AG04449 (cell line): ENCODE measurements at regions of chr15 and their contacts with region 1.

Region 1: GRCh38 chr15:75508840-75509532 is 57.5 kb upstream of the SIN3A start:
- DNase-seq: no peak
- H3K4me3 ChIP-seq: no peak overlapping the region
- CTCF ChIP-seq: peak; percentile 54

Region 2: GRCh38 chr15:75073197-75073596 is 435.8 kb before region 1 on chr15:
- CTCF ChIA-PET with region 1: no interaction called
- POLR2A ChIA-PET with region 1: no interaction called
- DNase-seq: no peak
- H3K4me3 ChIP-seq: no peak overlapping the region
- CTCF ChIP-seq: no peak

Region 3: GRCh38 chr15:75327005-75327404 is 182.0 kb before region 1 on chr15:
- CTCF ChIA-PET with region 1: no interaction called
- POLR2A ChIA-PET with region 1: no interaction called
- DNase-seq: no peak
- H3K4me3 ChIP-seq: no peak overlapping the region
- CTCF ChIP-seq: no peak

Region 4: DNA sequence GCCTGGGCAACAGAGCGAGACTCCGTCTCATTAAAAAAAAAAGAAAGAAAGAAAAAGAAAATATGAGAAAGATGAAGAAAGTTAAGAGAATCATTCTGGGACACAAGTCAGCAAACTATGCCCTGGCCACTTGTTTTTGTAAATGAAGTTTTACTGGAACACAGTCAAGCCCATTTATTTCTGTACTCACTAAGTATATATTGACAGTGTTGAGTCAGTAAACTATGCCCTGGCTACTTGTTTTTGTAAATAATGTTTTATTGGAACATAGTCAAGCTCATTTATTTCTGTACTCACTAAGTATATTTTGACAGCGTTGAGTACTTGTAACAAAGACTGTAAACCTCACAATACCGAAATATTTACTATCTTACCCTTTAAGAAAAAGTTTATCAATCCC is 15.3 kb before region 1 on chr15:
- CTCF ChIA-PET with region 1: interaction called, 17 read pairs
- POLR2A ChIA-PET with region 1: no interaction called
- DNase-seq: no peak
- H3K4me3 ChIP-seq: no peak overlapping the region
- CTCF ChIP-seq: no peak

Region 5: GRCh38 chr15:75523011-75523410 is 14.0 kb after region 1 on chr15:
- CTCF ChIA-PET with region 1: interaction called, 10 read pairs
- POLR2A ChIA-PET with region 1: no interaction called
- DNase-seq: no peak
- H3K4me3 ChIP-seq: no peak overlapping the region
- CTCF ChIP-seq: no peak